HCT116 (cell line): ENCODE measurements at regions of chr7 and their contacts with region 1.

Region 1: DNA sequence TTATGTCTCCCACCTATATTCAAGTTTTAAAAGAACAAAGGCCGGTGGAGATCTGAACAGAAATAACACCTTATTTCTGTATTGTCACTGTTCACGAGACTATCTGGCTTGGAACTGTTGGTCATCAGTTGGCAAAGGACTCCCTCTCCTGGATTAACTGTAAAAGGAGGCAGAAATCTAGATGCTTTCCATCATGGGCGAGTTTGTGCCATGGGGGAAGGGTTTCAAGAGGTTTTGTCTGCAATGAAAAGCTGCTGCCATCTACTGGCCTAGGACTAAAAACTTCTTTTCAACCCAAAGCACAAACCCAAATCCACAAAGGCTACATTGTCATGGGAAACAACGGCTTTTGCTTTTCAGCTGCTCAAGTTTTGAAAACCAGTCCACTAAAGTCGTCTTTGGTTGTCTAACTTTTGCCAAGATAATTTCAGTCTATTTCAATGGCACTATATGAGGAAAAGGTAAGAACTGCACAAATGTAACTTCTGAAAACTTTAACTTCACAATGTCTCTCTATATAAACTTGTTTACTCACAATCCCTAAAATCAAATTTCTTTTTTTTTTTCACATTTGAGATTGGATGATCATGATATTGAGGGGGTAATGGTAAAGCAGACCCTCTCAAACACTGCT is 196.8 kb downstream of the SKAP2 start:
- DNase-seq: peak; percentile 94
- ATAC-seq: peak; percentile 100
- H3K4me3 ChIP-seq: no peak overlapping the region
- H3K27ac ChIP-seq: no peak overlapping the region
- H3K4me1 ChIP-seq: 0 out of 4 replicates have a peak, but pooled peaks cover 0 to 2% of the 10 kb centered on the region in 2 experiments
- H3K27me3 ChIP-seq: no peaks in the 10 kb centered on the region
- CTCF ChIP-seq: peak; percentile 82 to 99 (median 96)
- POLR2A ChIP-seq: no peak
- RAD21 ChIP-seq: peak; percentile 100

Region 2: DNA sequence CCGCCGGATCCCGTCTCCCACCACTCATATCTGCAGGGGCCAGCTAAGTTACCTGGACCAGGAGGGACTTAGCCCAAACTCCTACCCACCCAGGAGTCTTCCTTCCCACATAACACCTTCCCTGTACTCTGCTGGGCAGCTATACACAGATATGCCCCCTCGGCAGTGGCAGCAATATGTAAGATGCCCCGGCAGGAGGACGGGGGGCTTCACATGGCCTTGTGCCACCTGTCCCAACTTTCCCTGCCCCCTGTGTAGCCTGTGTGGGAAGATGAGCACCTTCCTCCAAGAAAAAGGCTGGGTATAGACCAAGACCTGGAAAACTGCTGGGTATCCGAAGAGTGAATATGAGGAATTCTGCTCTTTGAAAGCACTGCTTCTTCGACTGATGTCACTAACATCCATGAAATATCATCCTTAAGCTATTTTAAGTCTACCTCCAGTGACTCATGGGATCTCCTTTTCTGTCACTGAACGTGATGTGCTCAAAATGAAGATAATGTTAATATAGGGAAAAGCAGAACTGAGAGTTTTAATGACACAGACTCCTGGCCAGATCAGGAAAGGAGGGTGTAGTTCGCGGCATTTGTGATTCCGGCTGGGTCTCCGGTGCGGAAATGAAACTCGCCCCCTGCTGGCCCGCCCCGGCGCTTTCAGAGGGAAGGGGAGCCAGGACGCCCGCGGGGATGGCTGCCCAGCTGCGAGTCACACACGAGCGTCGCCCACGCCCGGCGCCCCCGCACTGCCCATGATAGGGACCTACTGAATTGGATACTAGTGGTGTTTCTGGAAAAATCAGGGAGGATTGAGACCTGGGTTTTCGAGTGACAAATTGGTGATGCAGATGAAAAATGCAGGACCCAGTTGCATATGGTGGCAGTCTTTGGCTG is 772.5 kb before region 1 on chr7:
- CTCF ChIA-PET with region 1: interaction called, 13 read pairs
- POLR2A ChIA-PET with region 1: no interaction called
- RAD21 ChIA-PET with region 1: no interaction called
- intact Hi-C with region 1: loop called (anchors 1 kb)
- DNase-seq: peak; percentile 18
- ATAC-seq: peak; percentile 74
- H3K4me3 ChIP-seq: peak overlapping the region; percentile 18 to 24
- H3K27ac ChIP-seq: peak overlapping the region; percentile 26; the same call in 1 of the 2 replicates
- H3K4me1 ChIP-seq: peaks cover 6 to 28% of the 10 kb centered on the region in 2 experiments; a peak in 3 of 4 replicates
- H3K27me3 ChIP-seq: no peaks in the 10 kb centered on the region
- CTCF ChIP-seq: peak; percentile 49 to 86 (median 78); a peak in 5 of 6 replicates
- POLR2A ChIP-seq: no peak
- RAD21 ChIP-seq: peak; percentile 40; the same call in 1 of the 2 replicates

Region 3: GRCh38 chr7:26200444-26201246 is 467.0 kb before region 1 on chr7 and contains the start of gene HNRNPA2B1:
- CTCF ChIA-PET with region 1: no interaction called
- POLR2A ChIA-PET with region 1: no interaction called
- RAD21 ChIA-PET with region 1: no interaction called
- intact Hi-C with region 1: loop called (anchors 5 kb)
- DNase-seq: peak; percentile 95
- ATAC-seq: peak; percentile 78
- H3K4me3 ChIP-seq: peak within 1 kb of the TSS; percentile 68 to 93
- H3K27ac ChIP-seq: peak within 1 kb of the TSS; percentile 97
- H3K4me1 ChIP-seq: peaks cover 13 to 39% of the 10 kb centered on the region in 2 experiments
- H3K27me3 ChIP-seq: no peaks in the 10 kb centered on the region
- CTCF ChIP-seq: no peak
- POLR2A ChIP-seq: peak; percentile 99
- RAD21 ChIP-seq: no peak
- total RNA-seq, gene HNRNPA2B1: 870 TPM

Region 4: GRCh38 chr7:26376175-26376917 is 291.3 kb before region 1 on chr7:
- CTCF ChIA-PET with region 1: interaction called, 34 read pairs
- POLR2A ChIA-PET with region 1: no interaction called
- RAD21 ChIA-PET with region 1: interaction called in 1 of 2 experiments, 4 read pairs
- intact Hi-C with region 1: no loop called
- DNase-seq: no peak
- ATAC-seq: peak; percentile 12; the same call in 1 of the 2 replicates
- H3K4me3 ChIP-seq: no peak overlapping the region
- H3K27ac ChIP-seq: no peak overlapping the region
- H3K4me1 ChIP-seq: no peaks in the 10 kb centered on the region
- H3K27me3 ChIP-seq: no peaks in the 10 kb centered on the region
- CTCF ChIP-seq: no peak
- POLR2A ChIP-seq: no peak
- RAD21 ChIP-seq: no peak

Region 5: GRCh38 chr7:26686448-26686981 is 18.9 kb after region 1 on chr7:
- CTCF ChIA-PET with region 1: interaction called, 19 read pairs
- POLR2A ChIA-PET with region 1: no interaction called
- RAD21 ChIA-PET with region 1: no interaction called
- intact Hi-C with region 1: no loop called
- DNase-seq: peak; percentile 21
- ATAC-seq: peak; percentile 78
- H3K4me3 ChIP-seq: no peak overlapping the region
- H3K27ac ChIP-seq: no peak overlapping the region
- H3K4me1 ChIP-seq: peaks cover 4 to 11% of the 10 kb centered on the region in 2 experiments; a peak in 3 of 4 replicates
- H3K27me3 ChIP-seq: no peaks in the 10 kb centered on the region
- CTCF ChIP-seq: peak; percentile 53 to 72 (median 66)
- POLR2A ChIP-seq: no peak
- RAD21 ChIP-seq: peak; percentile 71